MCF 10A (cell line): ENCODE measurements at regions of chr12 and their contacts with region 1.

Region 1: DNA sequence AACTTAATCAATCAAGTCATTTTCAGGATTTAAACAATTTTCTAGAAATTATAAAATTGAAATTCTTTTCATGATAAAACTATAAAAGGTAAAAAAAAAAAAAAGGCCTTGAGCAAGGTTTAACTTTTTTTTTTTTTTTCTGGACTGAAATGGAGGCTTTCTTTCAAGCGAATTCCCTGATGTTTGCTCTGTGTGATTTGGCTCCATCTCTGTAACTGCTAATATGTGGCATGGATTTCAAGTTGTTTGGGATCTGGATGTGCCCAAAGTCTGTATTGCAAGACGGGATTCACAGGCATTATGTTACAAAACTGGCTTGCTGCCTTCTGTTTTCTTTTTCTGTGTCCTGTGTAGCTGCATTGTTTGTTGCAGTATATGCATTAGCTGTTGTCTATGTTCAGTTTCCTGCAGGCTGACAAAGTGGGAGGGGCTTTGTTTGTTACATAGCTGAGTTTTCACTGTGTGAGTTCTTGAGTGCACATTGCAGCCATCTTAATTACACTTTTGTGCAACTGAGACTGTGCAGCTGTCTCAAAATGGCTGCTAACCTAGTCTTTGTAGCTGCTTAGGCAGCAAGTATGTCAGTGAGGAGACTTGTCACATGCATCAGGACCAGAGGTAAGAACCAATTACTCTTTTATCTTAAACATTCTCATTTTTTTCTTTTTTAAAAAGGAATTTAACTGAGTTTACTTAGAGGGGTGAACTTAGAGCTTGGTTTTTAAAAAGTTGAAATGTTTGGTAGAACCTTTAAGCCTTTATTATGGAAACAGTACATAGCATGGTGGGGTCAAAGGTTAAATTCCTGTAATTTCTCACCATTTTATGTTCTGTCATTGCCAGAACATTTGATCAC is 19.5 kb downstream of the ATF7IP start:
- DNase-seq: peak; percentile 89
- H3K4me3 Mint-ChIP-seq: peak overlapping the region; percentile 57
- H3K27ac Mint-ChIP-seq: peak overlapping the region; percentile 92
- H3K4me1 Mint-ChIP-seq: peaks cover 6% of the 10 kb centered on the region
- H3K27me3 Mint-ChIP-seq: no peaks in the 10 kb centered on the region
- CTCF ChIP-seq: no peak

Region 2: GRCh38 chr12:14199455-14200198 is 185.4 kb before region 1 on chr12:
- CTCF ChIA-PET with region 1: no interaction called
- POLR2A ChIA-PET with region 1: no interaction called
- intact Hi-C with region 1: no loop called
- DNase-seq: no peak
- H3K4me3 Mint-ChIP-seq: no peak overlapping the region
- H3K27ac Mint-ChIP-seq: no peak overlapping the region
- H3K4me1 Mint-ChIP-seq: no peaks in the 10 kb centered on the region
- H3K27me3 Mint-ChIP-seq: no peaks in the 10 kb centered on the region
- CTCF ChIP-seq: no peak

Region 3: DNA sequence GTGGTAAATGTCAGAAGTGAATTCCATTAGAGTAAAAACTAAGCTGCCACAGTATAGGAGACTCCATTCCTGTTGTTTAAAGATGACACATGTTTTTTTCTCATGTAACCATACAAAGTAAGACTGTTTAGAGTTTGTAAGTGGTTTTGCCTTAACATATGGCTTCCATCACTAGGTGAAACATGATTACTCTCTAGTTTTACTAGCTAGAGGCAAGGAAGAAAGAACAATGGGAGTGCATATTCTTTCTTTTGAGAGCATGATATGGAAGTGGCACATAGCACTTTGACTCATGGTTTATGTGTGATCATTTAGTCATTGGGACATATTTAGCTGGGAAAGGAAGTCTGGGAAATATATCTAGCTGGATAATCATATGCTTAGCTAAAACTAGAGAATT is 11.8 kb before region 1 on chr12:
- CTCF ChIA-PET with region 1: interaction called, 14 read pairs
- POLR2A ChIA-PET with region 1: interaction called, 54 read pairs
- intact Hi-C with region 1: no loop called
- DNase-seq: peak; percentile 42
- H3K4me3 Mint-ChIP-seq: no peak overlapping the region
- H3K27ac Mint-ChIP-seq: peak overlapping the region; percentile 73
- H3K4me1 Mint-ChIP-seq: peaks cover 17% of the 10 kb centered on the region
- H3K27me3 Mint-ChIP-seq: no peaks in the 10 kb centered on the region
- CTCF ChIP-seq: no peak

Region 4: GRCh38 chr12:14403711-14404196 is 18.7 kb after region 1 on chr12:
- CTCF ChIA-PET with region 1: interaction called, 7 read pairs
- POLR2A ChIA-PET with region 1: interaction called, 18 read pairs
- intact Hi-C with region 1: no loop called
- DNase-seq: peak; percentile 69
- H3K4me3 Mint-ChIP-seq: peak overlapping the region; percentile 28
- H3K27ac Mint-ChIP-seq: peak overlapping the region; percentile 91
- H3K4me1 Mint-ChIP-seq: peaks cover 27% of the 10 kb centered on the region
- H3K27me3 Mint-ChIP-seq: no peaks in the 10 kb centered on the region
- CTCF ChIP-seq: no peak